Heart right ventricle (tissue), 16 donors: ENCODE measurements at regions of chrX and their contacts with region 1.

Region 1: GRCh38 chrX:101799387-101799786 is 132.4 kb downstream of the ZMAT1 start:
- DNase-seq: peak; percentile 67 to 90
- ATAC-seq: peak; percentile 97 to 100 (median 100)
- H3K4me3 ChIP-seq: peak overlapping the region in 6 of 10 donors; percentile 22 to 38 (median 30)
- H3K27ac ChIP-seq: no peak overlapping the region
- H3K4me1 ChIP-seq: no peaks in the 10 kb centered on the region
- H3K27me3 ChIP-seq: peaks cover 0 to 13% (median 0%) of the 10 kb centered on the region in 7 donors
- CTCF ChIP-seq: peak; percentile 46 to 83 (median 71)

Region 2: GRCh38 chrX:100609591-100609990 is 1189.8 kb before region 1 on chrX:
- intact Hi-C with region 1: no loop called
- DNase-seq: no peak
- ATAC-seq: no peak
- H3K4me3 ChIP-seq: no peak overlapping the region
- H3K27ac ChIP-seq: no peak overlapping the region
- H3K4me1 ChIP-seq: no peaks in the 10 kb centered on the region
- H3K27me3 ChIP-seq: peaks cover 0 to 88% (median 0%) of the 10 kb centered on the region in 7 donors
- CTCF ChIP-seq: peak in 4 of 9 donors; percentile 29 to 35 (median 32)

Region 3: DNA sequence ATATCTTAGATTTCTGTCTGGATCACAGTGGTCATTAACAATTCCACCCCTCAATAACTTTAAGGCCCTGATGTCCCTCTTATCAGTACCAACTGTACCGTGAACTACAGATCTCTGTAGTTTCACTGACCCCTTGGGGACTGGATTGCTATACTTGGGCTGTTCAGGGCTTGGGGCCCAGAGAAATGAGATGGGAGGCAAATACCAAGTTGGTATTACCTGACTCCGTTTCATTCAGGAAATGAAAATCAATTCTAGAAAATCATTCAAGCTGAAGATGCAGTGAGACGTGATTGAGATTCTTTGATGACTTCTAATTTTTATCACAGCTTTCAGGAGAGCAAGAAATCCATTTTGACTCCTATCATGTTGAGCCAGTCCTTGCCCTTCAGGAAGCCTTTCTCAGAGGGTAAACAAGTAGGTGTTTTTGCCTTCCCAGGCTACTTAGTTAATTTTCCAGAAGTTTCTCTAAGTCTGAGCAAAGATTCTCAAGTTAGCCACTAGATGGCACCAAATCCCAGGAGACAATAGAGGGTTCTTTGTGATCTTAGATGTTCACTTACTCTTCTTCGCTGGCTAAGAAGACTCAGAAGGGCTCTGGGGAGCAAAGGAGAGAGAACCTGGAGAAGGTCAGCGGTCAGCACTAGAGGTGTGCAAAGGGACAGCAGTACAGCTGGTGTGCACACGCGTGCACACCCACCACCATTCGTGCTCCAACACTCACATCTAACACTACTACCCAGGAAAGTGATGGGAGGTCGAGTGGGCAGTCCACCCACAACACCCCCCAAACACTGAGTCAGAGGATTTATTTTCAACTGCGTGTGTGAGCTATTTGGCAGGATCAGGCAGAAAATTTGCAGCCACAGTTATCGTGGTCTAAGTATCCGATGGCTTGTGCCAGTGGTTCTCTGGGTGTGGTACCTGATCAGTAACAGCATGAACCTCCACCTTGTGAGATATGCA is 383.9 kb before region 1 on chrX:
- intact Hi-C with region 1: loop called in 7 of 10 experiments (anchors 2 to 5 kb)
- DNase-seq: peak in 1 of 2 donors; percentile 24
- ATAC-seq: peak in 5 of 8 donors; percentile 19 to 50 (median 31)
- H3K4me3 ChIP-seq: no peak overlapping the region
- H3K27ac ChIP-seq: peak overlapping the region in 7 of 10 donors; percentile 6 to 75 (median 66)
- H3K4me1 ChIP-seq: peaks cover 0 to 50% (median 18%) of the 10 kb centered on the region in 9 donors
- H3K27me3 ChIP-seq: peaks cover 0 to 45% (median 0%) of the 10 kb centered on the region in 7 donors
- CTCF ChIP-seq: peak; percentile 55 to 85 (median 68)

Region 4: DNA sequence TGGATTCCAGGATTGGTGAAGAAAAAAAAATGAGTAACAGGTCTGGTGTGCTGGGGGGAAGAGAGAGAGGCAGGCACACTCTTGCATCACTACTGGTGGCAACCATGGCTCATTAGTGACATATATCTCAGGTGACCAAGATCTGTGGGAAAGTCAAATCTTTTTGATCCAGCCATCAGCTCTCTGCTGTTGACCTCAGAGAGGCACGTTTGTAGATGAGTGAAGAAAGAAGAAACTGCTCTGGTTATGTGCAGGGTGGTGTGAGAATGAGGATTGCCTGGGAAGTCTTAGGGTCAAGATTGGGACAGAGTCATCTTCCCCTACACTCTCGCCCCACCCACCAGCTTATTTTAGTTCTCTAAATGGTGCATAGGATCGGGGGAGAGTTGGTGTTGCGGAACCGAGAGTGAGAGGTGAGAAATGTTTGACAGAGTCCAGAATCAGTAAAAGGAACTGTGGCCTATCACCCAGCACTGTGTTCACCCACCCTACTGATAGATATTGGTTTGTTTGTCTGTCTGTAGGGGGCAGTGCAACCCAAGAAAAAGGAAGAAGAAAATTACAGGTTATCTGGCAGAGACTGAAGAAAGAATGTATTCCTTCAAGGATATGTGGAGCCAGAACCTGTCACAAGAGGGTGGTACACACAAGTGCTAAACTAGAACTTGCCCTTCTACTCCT is 203.5 kb before region 1 on chrX:
- intact Hi-C with region 1: loop called (anchors 5 to 10 kb)
- DNase-seq: peak in 1 of 2 donors; percentile 49
- ATAC-seq: peak in 7 of 8 donors; percentile 46 to 73 (median 63)
- H3K4me3 ChIP-seq: no peak overlapping the region
- H3K27ac ChIP-seq: no peak overlapping the region
- H3K4me1 ChIP-seq: no peaks in the 10 kb centered on the region
- H3K27me3 ChIP-seq: peaks cover 0 to 28% (median 0%) of the 10 kb centered on the region in 7 donors
- CTCF ChIP-seq: peak; percentile 25 to 68 (median 57)

Region 5: GRCh38 chrX:101617211-101618191 is 181.9 kb before region 1 on chrX and contains the start of gene ARMCX6:
- intact Hi-C with region 1: loop called in 1 of 10 experiments (anchors 5 kb)
- DNase-seq: peak; percentile 74 to 75
- ATAC-seq: peak; percentile 90 to 98 (median 95)
- H3K4me3 ChIP-seq: peak within 1 kb of the TSS; percentile 32 to 83 (median 70)
- H3K27ac ChIP-seq: peak within 1 kb of the TSS; percentile 8 to 86 (median 78)
- H3K4me1 ChIP-seq: peaks cover 0 to 12% (median 5%) of the 10 kb centered on the region in 9 donors
- H3K27me3 ChIP-seq: no peaks in the 10 kb centered on the region
- CTCF ChIP-seq: peak; percentile 12 to 66 (median 47)
- total RNA-seq, gene ARMCX6: 16.8 to 43.1 (median 35.1) TPM

Region 6: DNA sequence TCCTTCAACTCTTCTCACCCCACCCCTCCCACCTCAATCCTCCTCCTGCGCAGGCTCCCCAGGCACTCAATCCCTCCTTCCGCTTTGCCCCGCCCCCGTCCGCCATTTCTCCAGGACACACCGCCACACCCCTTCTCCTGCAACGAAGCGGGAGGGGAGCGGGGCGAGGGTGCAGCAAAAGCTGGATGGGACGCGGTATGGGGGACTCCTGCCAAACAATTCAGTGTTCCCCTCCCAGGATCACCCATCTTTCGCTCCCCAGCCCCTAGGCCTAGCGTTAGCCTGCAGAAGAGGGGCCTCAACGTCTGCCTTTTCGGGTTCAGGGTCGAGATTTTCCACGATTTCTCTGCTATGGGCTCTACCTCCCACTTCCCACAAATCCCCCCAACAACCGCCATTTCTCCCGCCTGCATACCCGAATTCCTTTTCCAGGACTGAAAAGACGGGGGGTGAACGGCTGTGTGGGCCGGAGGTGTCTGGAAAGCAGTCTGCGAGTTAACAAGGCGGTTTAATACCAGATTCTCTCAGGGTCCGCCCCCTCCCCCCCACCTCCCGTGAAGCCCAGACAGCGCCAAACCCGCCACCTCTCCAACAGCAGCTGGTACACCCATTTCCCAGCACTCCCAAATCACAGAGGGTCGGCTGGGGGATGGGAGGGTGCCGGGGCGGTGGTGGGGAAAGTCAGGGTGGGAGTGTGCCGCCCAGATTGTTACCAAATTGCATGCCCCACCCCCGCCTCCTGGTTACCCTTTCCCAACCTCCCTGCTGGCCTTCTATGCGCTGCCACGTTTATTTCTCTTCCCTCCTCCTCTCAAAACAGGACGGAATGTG is 140.5 kb before region 1 on chrX:
- intact Hi-C with region 1: loop called in 1 of 10 experiments (anchors 5 kb)
- DNase-seq: peak; percentile 71 to 79
- ATAC-seq: peak; percentile 81 to 96 (median 94)
- H3K4me3 ChIP-seq: peak overlapping the region; percentile 18 to 70 (median 64)
- H3K27ac ChIP-seq: peak overlapping the region in 8 of 10 donors; percentile 52 to 78 (median 66)
- H3K4me1 ChIP-seq: peaks cover 0 to 11% (median 0%) of the 10 kb centered on the region in 9 donors
- H3K27me3 ChIP-seq: peaks cover 0 to 27% (median 0%) of the 10 kb centered on the region in 7 donors
- CTCF ChIP-seq: no peak

Region 7: DNA sequence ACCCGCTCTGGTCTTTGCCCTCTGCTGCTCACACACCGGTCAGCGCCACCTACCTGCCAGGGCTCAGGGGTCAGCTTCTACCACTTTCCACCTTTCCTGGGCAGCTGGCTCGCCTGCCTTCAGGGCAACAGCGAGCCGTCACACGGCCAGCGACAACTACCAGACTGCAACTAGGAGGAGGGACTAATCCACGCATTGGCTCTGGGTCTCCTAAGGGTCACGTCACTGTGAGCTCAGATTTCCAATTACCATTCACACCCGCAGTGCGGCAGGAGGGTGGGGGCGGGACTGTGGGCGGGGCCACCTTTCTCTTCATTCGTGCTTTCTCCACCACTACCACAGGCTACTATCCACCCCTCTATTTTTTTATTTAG is 356.4 kb after region 1 on chrX and contains the start of gene BEX5:
- intact Hi-C with region 1: no loop called
- DNase-seq: peak; percentile 17 to 27
- ATAC-seq: peak; percentile 79 to 97 (median 89)
- H3K4me3 ChIP-seq: peak within 1 kb of the TSS in 9 of 10 donors; percentile 16 to 47 (median 42)
- H3K27ac ChIP-seq: peak within 1 kb of the TSS in 1 of 10 donors; percentile 14
- H3K4me1 ChIP-seq: no peaks in the 10 kb centered on the region
- H3K27me3 ChIP-seq: peaks cover 0 to 67% (median 0%) of the 10 kb centered on the region in 7 donors
- CTCF ChIP-seq: no peak
- total RNA-seq, gene BEX5: 0.32 to 2.1 (median 0.90) TPM